Aorta (tissue), 5 donors: ENCODE measurements at regions of chr12 and their contacts with region 1.

Region 1: DNA sequence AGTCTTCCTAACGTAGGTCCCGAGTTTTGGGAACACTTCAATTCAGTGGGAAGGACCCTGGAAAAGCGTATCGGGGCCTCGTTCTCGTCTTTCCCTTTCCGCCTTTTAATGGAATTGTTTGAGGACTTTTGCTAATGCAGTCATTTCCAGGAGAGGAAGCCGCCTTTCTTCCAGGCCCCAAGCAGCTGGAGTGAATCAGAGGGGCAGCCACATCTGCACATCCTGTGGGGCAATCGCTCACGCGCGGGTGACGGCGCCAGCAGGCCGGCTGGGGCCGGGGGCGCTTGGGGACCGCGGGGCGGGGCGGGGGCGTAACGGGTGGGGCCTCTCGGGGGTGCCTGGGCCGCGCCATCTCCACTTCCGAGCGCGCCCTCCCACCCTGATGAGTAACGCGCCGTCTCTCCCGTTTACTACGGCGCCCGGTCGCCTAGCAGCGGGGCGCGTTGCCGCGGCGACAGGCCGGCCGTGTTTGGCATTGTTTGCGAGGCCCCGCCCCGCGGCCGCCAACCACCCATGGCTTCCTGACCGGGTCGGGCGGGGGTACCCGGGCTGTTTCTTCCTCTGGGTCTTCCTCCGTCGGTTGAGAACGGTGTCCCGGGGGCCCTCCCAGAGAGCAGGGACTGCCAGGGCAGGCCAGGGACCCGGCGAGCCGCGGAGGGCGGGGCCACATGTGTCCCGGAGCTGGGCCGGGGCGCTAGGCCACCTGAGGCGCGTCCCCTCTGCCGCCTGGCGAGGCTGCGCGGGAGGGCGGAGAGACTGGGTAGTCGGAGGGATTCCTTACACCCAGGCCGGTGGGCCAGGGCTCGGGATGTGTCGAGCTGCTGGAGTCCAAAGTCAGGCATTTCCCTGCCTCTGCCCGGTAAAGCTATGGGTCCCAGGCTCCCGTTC is 2.3 kb downstream of the GSG1 start:
- DNase-seq: peak; percentile 95 to 98
- ATAC-seq: peak; percentile 93
- H3K4me3 ChIP-seq: peak overlapping the region; percentile 16 to 24
- H3K27ac ChIP-seq: peak overlapping the region; percentile 91 to 92
- H3K4me1 ChIP-seq: peaks cover 0 to 2% of the 10 kb centered on the region in 2 donors
- H3K27me3 ChIP-seq: no peaks in the 10 kb centered on the region

Region 2: DNA sequence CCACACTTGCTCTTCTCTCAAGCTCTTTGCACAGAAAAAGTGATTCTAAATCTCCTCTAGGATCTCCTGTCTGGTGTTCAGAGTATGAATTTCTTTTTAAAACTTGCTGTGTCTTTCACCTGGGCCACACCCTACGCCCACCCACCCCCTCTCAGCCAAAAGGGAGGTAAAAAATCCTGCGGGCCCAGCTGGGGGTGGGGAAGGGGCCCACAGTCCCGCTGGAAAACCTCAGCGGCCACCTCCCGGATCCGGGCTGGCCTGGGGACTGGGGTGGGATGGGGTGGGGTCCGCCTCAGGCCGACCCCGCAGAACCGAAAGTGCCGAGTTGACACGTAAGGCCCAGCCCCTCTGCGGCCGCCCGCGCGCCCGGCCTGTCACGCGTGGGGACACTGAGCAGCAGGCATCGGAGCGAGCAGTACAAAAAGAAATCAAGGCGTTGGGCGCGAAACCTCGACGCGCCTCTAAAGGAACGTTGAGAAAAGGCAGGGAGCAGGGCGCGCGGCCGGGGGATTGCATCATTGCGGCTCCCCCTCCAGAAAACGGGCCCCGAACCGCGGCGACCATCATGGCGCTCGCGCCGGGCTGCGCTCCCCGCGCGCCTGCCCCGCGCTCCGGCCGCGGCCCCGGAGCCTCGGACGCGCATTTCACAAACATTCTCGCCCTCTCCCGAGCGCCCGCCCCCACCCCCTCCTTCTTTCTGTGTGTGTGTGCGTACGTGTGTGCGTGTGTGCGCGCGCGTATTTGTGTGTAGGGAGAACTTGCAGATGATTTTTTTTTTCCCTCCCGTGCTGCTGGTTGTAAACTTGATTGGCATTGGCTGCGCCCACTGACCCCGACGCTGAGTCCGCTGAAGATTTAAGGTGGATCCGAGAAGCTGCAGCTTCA is 376.2 kb before region 1 on chr12:
- intact Hi-C with region 1: loop called in 1 of 2 experiments (anchors 10 kb)
- DNase-seq: peak; percentile 95 to 96
- ATAC-seq: peak; percentile 91
- H3K4me3 ChIP-seq: peak overlapping the region; percentile 47 to 96
- H3K27ac ChIP-seq: peak overlapping the region; percentile 62 to 73
- H3K4me1 ChIP-seq: no peaks in the 10 kb centered on the region
- H3K27me3 ChIP-seq: no peaks in the 10 kb centered on the region

Region 3: GRCh38 chr12:12999959-13000615 is 101.0 kb before region 1 on chr12 and contains the start of gene HEBP1:
- intact Hi-C with region 1: loop called (anchors 5 kb)
- DNase-seq: peak; percentile 97 to 99
- ATAC-seq: peak; percentile 98
- H3K4me3 ChIP-seq: peak within 1 kb of the TSS; percentile 84 to 89
- H3K27ac ChIP-seq: peak within 1 kb of the TSS; percentile 83 to 95
- H3K4me1 ChIP-seq: peaks cover 0 to 1% of the 10 kb centered on the region in 2 donors
- H3K27me3 ChIP-seq: no peaks in the 10 kb centered on the region
- total RNA-seq, gene HEBP1: 55.8 to 73.6 TPM

Region 4: DNA sequence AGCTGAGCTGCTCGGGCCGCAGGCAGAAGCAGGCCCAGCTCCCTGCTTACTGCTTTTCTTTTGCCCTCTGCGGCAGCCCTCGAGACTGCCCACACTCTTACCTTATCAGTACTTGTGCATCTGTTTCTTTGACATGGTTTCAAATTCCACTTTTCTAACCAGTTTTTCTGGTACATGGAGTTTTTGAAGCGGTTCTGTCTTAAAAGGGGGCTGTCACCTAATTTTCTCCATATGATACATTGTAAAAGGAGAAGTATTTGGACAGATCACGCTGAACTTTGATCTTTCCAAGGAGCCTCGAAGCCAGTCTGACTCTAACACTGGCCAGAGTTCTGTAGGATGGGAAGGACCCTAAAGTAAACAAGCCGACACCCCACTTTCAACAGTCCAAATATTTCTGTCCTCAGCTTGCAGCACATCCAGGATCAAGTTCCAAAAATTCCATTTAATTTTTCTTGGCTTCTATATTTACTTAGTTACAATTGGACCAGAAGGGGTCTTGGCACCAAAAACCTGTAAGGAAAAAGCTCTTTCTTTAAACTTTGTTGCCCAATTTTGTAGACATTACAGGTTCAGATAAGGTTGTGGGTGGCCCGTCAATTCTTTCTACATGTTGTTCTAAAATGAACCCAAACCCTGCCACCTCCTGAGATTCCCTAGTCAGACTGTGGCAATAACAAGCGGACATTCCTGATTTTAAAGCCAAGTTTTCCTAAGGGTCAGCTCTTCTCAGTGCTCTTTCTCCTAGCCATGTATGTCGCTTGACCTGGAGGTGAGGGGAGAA is 47.1 kb after region 1 on chr12:
- intact Hi-C with region 1: loop called in 1 of 2 experiments (anchors 5 kb)
- DNase-seq: no peak
- ATAC-seq: peak; percentile 52
- H3K4me3 ChIP-seq: no peak overlapping the region
- H3K27ac ChIP-seq: peak overlapping the region; percentile 61 to 75
- H3K4me1 ChIP-seq: peaks cover 0 to 4% of the 10 kb centered on the region in 2 donors
- H3K27me3 ChIP-seq: no peaks in the 10 kb centered on the region

Region 5: GRCh38 chr12:13196130-13196921 is 95.2 kb after region 1 on chr12 and contains the start of gene EMP1:
- intact Hi-C with region 1: loop called (anchors 2 to 5 kb)
- DNase-seq: peak; percentile 95 to 97
- ATAC-seq: peak; percentile 90
- H3K4me3 ChIP-seq: peak within 1 kb of the TSS; percentile 39 to 85
- H3K27ac ChIP-seq: peak within 1 kb of the TSS; percentile 10 to 90
- H3K4me1 ChIP-seq: peaks cover 0 to 3% of the 10 kb centered on the region in 2 donors
- H3K27me3 ChIP-seq: no peaks in the 10 kb centered on the region
- total RNA-seq, gene EMP1: 593 to 594 TPM